ENCODE measurements at regions of chr3 and their contacts with region 1.

Region 1: DNA sequence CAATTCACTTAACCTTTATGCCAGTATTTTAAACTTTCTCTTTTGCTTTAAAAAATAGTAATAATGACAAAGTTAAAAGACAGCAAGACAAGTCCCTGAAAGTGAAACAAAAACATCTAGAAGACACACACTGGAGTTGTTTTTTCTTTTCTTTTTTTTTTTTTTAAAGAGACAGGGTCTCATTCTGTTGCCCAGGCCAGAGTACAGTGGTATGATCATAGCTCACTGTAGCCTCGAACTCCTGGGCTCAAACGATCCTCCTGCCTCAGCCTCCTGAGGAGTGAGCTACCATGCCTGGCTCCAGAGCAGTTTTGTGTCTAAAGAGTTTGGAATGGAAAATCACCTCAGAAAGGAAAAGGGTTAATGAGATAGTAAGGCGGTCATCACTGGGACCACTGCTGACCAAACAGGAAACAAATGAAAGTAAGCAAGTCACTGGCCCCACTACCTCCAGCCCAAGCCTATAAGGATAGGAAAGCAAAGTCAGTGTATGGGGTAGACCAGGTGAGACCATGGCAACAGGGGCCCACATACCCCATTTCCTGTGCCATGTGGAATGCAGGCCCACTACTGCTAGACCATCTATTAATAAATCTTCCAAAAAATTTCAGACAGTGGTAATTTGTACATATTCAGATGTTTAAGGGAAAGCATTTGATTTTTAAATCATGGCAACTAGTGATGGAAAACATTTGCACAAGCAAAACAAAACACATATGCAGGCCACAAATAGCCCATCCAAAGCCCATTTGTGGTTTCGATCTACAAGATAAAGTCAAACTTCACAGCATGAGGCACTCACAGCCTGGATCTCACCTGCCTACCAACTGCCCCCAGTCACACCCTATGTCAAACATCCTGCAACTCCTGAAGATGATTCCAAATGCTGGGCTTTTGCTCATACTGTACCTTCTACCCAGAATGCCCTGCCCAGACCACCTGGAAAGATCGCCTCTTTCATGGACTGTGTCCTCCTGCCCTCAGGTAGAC is 62.6 kb downstream of the OSBPL10 start:
- DNase-seq: peak; percentile 46
- ATAC-seq: peak; percentile 64
- H3K4me3 ChIP-seq: peak overlapping the region in 1 of 5 experiments; percentile 9
- H3K4me3 Mint-ChIP-seq: peak overlapping the region; percentile 74
- H3K27ac ChIP-seq: peak overlapping the region; percentile 45 to 79
- H3K27ac Mint-ChIP-seq: peak overlapping the region; percentile 91
- H3K4me1 ChIP-seq: peaks cover 45 to 55% of the 10 kb centered on the region in 2 donors
- H3K4me1 Mint-ChIP-seq: peaks cover 80% of the 10 kb centered on the region
- H3K27me3 ChIP-seq: no peaks in the 10 kb centered on the region
- H3K27me3 Mint-ChIP-seq: no peaks in the 10 kb centered on the region
- CTCF ChIP-seq: no peak

Region 2: DNA sequence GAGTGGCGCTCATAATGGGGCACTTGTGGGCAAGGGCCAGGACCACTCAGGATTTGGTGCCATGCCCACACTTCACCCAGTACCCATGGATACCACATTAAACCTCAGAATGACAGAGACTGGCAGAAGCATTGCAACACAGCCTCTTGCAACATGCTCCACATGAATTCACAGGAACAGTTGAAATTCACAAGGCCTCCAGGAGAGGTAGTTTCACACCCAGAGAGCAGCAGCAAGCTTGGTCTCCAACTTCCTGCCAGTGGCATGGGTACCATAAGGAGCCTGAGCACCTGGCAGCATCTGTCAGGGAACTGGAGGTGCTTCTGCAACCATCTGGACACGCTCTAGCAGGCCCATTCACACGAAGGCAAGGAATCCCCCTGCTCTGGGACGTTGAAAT is 38.5 kb before region 1 on chr3:
- CTCF ChIA-PET with region 1: no interaction called
- POLR2A ChIA-PET with region 1: no interaction called
- intact Hi-C with region 1: loop called (anchors 5 kb)
- DNase-seq: peak; percentile 63
- ATAC-seq: peak; percentile 65
- H3K4me3 ChIP-seq: no peak overlapping the region
- H3K4me3 Mint-ChIP-seq: no peak overlapping the region
- H3K27ac ChIP-seq: peak overlapping the region in 1 of 2 donors; percentile 53
- H3K27ac Mint-ChIP-seq: peak overlapping the region; percentile 87
- H3K4me1 ChIP-seq: peaks cover 42 to 46% of the 10 kb centered on the region in 2 donors
- H3K4me1 Mint-ChIP-seq: peaks cover 79% of the 10 kb centered on the region
- H3K27me3 ChIP-seq: no peaks in the 10 kb centered on the region
- H3K27me3 Mint-ChIP-seq: no peaks in the 10 kb centered on the region
- CTCF ChIP-seq: peak; percentile 23

Region 3: DNA sequence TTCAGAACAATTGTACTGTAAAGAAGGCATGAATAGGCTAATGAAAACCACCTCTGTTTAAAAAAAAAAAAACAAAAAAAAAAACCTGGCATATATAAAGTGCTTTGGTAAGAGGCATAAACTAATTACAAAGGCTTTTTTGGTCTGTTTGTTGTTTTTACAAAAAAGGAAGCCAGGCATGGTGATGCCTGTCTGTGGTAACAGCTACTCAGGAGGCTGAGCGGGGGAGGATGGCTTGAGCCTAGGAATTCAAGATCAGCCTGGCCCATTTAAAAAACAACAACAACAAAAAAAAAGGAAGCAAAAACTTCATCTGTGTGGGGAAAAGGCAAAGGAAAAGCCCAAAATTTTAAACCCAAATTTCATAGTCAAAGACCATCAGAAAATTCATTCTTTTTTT is 15.5 kb after region 1 on chr3:
- CTCF ChIA-PET with region 1: interaction called, 6 read pairs
- POLR2A ChIA-PET with region 1: no interaction called
- intact Hi-C with region 1: loop called (anchors 2 kb)
- DNase-seq: no peak
- ATAC-seq: peak; percentile 28
- H3K4me3 ChIP-seq: no peak overlapping the region
- H3K4me3 Mint-ChIP-seq: peak overlapping the region; percentile 40
- H3K27ac ChIP-seq: peak overlapping the region in 1 of 2 donors; percentile 67
- H3K27ac Mint-ChIP-seq: peak overlapping the region; percentile 77
- H3K4me1 ChIP-seq: peaks cover 60 to 75% of the 10 kb centered on the region in 2 donors
- H3K4me1 Mint-ChIP-seq: peaks cover 47% of the 10 kb centered on the region
- H3K27me3 ChIP-seq: no peaks in the 10 kb centered on the region
- H3K27me3 Mint-ChIP-seq: no peaks in the 10 kb centered on the region
- CTCF ChIP-seq: no peak

Region 4: DNA sequence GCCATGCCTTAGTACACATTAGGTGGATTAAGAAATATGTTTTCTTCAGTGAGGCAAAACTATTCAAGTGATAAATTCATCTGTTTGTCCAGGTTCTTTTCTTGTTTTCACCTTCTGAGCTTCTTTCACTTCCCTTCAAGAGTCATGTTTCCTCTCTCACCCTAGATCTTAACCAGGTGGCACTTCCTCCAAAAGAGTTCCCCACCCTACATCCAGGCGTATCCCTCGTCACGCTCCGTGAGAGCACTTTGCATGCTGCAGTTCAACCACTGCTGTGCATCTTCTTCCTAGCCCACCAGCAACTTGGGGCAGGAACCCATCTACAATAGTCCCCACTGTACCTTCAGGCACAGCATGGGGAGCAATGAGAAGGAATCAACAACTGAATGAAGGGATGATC is 33.7 kb after region 1 on chr3:
- CTCF ChIA-PET with region 1: interaction called, 3 read pairs
- POLR2A ChIA-PET with region 1: interaction called, 6 read pairs
- intact Hi-C with region 1: loop called (anchors 2 kb)
- DNase-seq: peak; percentile 90
- ATAC-seq: peak; percentile 84
- H3K4me3 ChIP-seq: peak overlapping the region in 2 of 5 experiments; percentile 35 to 52
- H3K4me3 Mint-ChIP-seq: peak overlapping the region; percentile 80
- H3K27ac ChIP-seq: peak overlapping the region; percentile 88
- H3K27ac Mint-ChIP-seq: peak overlapping the region; percentile 96
- H3K4me1 ChIP-seq: peaks cover 88 to 90% of the 10 kb centered on the region in 2 donors
- H3K4me1 Mint-ChIP-seq: peaks cover 88% of the 10 kb centered on the region
- H3K27me3 ChIP-seq: no peaks in the 10 kb centered on the region
- H3K27me3 Mint-ChIP-seq: no peaks in the 10 kb centered on the region
- CTCF ChIP-seq: no peak

Region 5: GRCh38 chr3:31960793-31961431 is 42.4 kb after region 1 on chr3:
- CTCF ChIA-PET with region 1: no interaction called
- POLR2A ChIA-PET with region 1: no interaction called
- intact Hi-C with region 1: loop called (anchors 1 kb)
- DNase-seq: peak; percentile 71
- ATAC-seq: peak; percentile 65
- H3K4me3 ChIP-seq: peak overlapping the region in 3 of 5 experiments; percentile 34 to 60 (median 36)
- H3K4me3 Mint-ChIP-seq: peak overlapping the region; percentile 89
- H3K27ac ChIP-seq: peak overlapping the region; percentile 56 to 88
- H3K27ac Mint-ChIP-seq: peak overlapping the region; percentile 95
- H3K4me1 ChIP-seq: peaks cover 76 to 84% of the 10 kb centered on the region in 2 donors
- H3K4me1 Mint-ChIP-seq: peaks cover 77% of the 10 kb centered on the region
- H3K27me3 ChIP-seq: no peaks in the 10 kb centered on the region
- H3K27me3 Mint-ChIP-seq: no peaks in the 10 kb centered on the region
- CTCF ChIP-seq: no peak

Region 6: GRCh38 chr3:32018757-32019564 is 100.5 kb after region 1 on chr3:
- CTCF ChIA-PET with region 1: no interaction called
- POLR2A ChIA-PET with region 1: no interaction called
- intact Hi-C with region 1: no loop called
- DNase-seq: peak; percentile 53
- ATAC-seq: peak; percentile 53
- H3K4me3 ChIP-seq: no peak overlapping the region
- H3K4me3 Mint-ChIP-seq: no peak overlapping the region
- H3K27ac ChIP-seq: no peak overlapping the region
- H3K27ac Mint-ChIP-seq: no peak overlapping the region
- H3K4me1 ChIP-seq: peaks cover 7 to 10% of the 10 kb centered on the region in 2 donors
- H3K4me1 Mint-ChIP-seq: peaks cover 13% of the 10 kb centered on the region
- H3K27me3 ChIP-seq: no peaks in the 10 kb centered on the region
- H3K27me3 Mint-ChIP-seq: no peaks in the 10 kb centered on the region
- CTCF ChIP-seq: peak; percentile 81

Region 7: DNA sequence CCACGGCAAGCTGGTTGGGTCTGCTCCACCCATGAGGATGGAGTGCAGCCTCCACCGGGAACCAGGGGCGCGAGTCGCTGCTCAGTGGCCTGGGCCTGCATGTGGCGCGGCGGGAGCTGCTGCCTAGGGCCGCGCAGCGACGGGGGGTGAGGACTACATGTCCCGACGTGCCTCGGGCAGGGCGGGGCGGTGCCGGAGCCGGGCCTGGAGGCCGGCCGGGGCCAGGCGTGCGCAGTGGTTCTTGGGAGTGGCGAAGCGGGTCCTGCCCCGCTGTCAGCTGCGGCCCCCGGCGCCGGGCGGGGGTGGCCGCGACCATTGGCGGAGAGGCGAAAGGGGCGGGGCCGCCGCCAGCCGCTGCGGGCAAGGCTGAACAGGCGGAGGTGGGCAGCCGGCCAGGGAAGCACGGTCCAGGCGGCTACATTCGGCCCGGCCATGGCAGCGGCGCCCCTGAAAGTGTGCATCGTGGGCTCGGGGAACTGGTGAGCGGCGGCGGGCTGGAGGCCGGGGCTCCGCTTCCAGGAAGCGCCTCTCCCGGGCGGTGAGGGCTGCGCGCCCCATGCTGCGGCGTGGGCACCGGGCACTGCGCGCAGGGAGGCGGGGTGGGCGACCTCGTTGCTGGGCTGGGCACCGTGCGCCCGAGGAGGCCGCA is 187.9 kb after region 1 on chr3 and contains the start of gene GPD1L:
- CTCF ChIA-PET with region 1: no interaction called
- POLR2A ChIA-PET with region 1: no interaction called
- intact Hi-C with region 1: loop called (anchors 1 kb)
- DNase-seq: peak; percentile 94
- ATAC-seq: peak; percentile 99
- H3K4me3 ChIP-seq: peak within 1 kb of the TSS; percentile 46 to 79 (median 75)
- H3K4me3 Mint-ChIP-seq: peak within 1 kb of the TSS; percentile 94
- H3K27ac ChIP-seq: no peak within 1 kb of the TSS
- H3K27ac Mint-ChIP-seq: peak within 1 kb of the TSS; percentile 88
- H3K4me1 ChIP-seq: peaks cover 11 to 14% of the 10 kb centered on the region in 2 donors
- H3K4me1 Mint-ChIP-seq: peaks cover 15% of the 10 kb centered on the region
- H3K27me3 ChIP-seq: no peaks in the 10 kb centered on the region
- H3K27me3 Mint-ChIP-seq: no peaks in the 10 kb centered on the region
- CTCF ChIP-seq: no peak
- total RNA-seq, gene GPD1L: 9.3 TPM in 2 replicates

Measured in B cell (primary cell).